ENCODE measurements at regions of chr18 and their contacts with region 1.

Region 1: DNA sequence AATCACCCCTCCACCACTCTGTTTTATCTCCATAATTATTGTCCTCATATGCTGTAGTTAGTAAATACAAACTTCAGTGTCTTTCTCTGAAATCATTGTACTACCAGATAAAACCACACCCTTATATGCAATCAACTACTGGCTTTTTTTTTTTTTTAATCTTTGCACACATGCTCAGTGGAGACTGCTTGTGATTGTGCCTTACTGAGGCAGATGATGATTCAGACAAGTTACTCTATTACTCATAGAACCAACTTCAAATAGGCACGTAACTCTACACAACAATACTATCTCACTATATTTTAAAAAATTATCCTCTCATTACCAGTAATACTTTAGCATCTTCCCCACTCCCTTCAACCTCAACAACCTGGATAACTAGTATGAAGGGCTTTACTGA is 1278.4 kb upstream of the PIK3C3 start:
- DNase-seq: no peak
- ATAC-seq: no peak
- H3K4me3 ChIP-seq: no peak overlapping the region
- H3K4me3 Mint-ChIP-seq: no peak overlapping the region
- H3K27ac ChIP-seq: no peak overlapping the region
- H3K27ac Mint-ChIP-seq: no peak overlapping the region
- H3K4me1 ChIP-seq: no peaks in the 10 kb centered on the region
- H3K4me1 Mint-ChIP-seq: no peaks in the 10 kb centered on the region
- H3K27me3 ChIP-seq: no peaks in the 10 kb centered on the region
- H3K27me3 Mint-ChIP-seq: no peaks in the 10 kb centered on the region
- CTCF ChIP-seq: no peak

Region 2: GRCh38 chr18:40662898-40663437 is 13.7 kb before region 1 on chr18:
- CTCF ChIA-PET with region 1: no interaction called
- POLR2A ChIA-PET with region 1: no interaction called
- intact Hi-C with region 1: no loop called
- DNase-seq: no peak
- ATAC-seq: no peak
- H3K4me3 ChIP-seq: no peak overlapping the region
- H3K4me3 Mint-ChIP-seq: no peak overlapping the region
- H3K27ac ChIP-seq: no peak overlapping the region
- H3K27ac Mint-ChIP-seq: no peak overlapping the region
- H3K4me1 ChIP-seq: no peaks in the 10 kb centered on the region
- H3K4me1 Mint-ChIP-seq: no peaks in the 10 kb centered on the region
- H3K27me3 ChIP-seq: no peaks in the 10 kb centered on the region
- H3K27me3 Mint-ChIP-seq: no peaks in the 10 kb centered on the region
- CTCF ChIP-seq: no peak

Region 3: GRCh38 chr18:40687399-40687798 is 10.7 kb after region 1 on chr18:
- CTCF ChIA-PET with region 1: no interaction called
- POLR2A ChIA-PET with region 1: no interaction called
- intact Hi-C with region 1: loop called (anchors 1 kb)
- DNase-seq: no peak
- ATAC-seq: no peak
- H3K4me3 ChIP-seq: no peak overlapping the region
- H3K4me3 Mint-ChIP-seq: no peak overlapping the region
- H3K27ac ChIP-seq: no peak overlapping the region
- H3K27ac Mint-ChIP-seq: no peak overlapping the region
- H3K4me1 ChIP-seq: no peaks in the 10 kb centered on the region
- H3K4me1 Mint-ChIP-seq: no peaks in the 10 kb centered on the region
- H3K27me3 ChIP-seq: no peaks in the 10 kb centered on the region
- H3K27me3 Mint-ChIP-seq: no peaks in the 10 kb centered on the region
- CTCF ChIP-seq: no peak

Region 4: GRCh38 chr18:40708726-40709125 is 32.1 kb after region 1 on chr18:
- CTCF ChIA-PET with region 1: no interaction called
- POLR2A ChIA-PET with region 1: no interaction called
- intact Hi-C with region 1: no loop called
- DNase-seq: no peak
- ATAC-seq: no peak
- H3K4me3 ChIP-seq: no peak overlapping the region
- H3K4me3 Mint-ChIP-seq: no peak overlapping the region
- H3K27ac ChIP-seq: no peak overlapping the region
- H3K27ac Mint-ChIP-seq: no peak overlapping the region
- H3K4me1 ChIP-seq: no peaks in the 10 kb centered on the region
- H3K4me1 Mint-ChIP-seq: no peaks in the 10 kb centered on the region
- H3K27me3 ChIP-seq: no peaks in the 10 kb centered on the region
- H3K27me3 Mint-ChIP-seq: no peaks in the 10 kb centered on the region
- CTCF ChIP-seq: no peak